Activated CD4-positive, alpha-beta T cell treated with anti-CD3 and anti-CD28 coated beads for 36 hours (primary cell): ENCODE measurements at regions of chr12 and their contacts with region 1.

Region 1: DNA sequence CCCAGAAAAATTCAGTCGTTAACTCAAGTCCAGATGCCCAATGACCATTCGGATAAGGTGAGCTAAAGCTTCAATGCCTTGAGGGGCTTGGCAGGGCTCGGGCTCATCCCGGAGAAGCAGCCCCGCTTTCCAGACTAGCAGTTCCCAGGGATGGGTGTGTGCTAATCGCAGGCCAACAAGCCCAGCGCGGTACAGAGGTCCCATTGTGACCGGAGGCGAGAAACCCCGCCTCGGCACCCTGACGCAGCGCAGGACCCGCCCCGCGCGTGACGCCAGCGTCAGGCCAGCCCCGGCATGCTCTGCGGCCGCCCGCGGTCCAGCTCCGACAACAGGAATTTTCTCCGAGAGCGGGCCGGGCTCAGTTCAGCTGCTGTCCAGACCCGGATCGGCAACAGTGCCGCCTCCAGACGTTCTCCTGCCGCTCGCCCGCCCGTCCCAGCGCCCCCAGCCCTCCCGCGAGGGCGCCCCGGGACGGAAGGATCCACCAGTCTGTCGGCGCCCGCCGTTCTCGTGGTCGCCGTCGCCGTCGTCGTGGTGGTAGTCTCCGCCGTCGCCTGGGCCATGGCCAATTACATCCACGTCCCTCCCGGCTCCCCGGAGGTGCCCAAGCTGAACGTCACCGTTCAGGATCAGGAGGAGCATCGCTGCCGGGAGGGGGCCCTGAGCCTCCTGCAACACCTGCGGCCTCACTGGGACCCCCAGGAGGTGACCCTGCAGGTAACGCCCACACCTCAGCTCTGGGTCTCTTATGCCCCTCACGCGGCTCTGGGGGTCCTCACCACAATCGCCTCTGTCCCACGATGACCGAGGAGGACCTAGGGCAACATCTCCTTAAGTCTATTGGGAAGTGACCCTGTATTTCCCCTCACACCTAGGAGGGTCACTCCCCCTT is at the start of gene ETNK1:
- DNase-seq: peak; percentile 92
- ATAC-seq: peak; percentile 98
- H3K4me3 Mint-ChIP-seq: peak within 1 kb of the TSS; percentile 96
- H3K27ac Mint-ChIP-seq: peak within 1 kb of the TSS; percentile 98
- H3K4me1 Mint-ChIP-seq: peaks cover 32% of the 10 kb centered on the region
- H3K27me3 Mint-ChIP-seq: peaks cover 4% of the 10 kb centered on the region
- total RNA-seq, gene ETNK1: 38.6 to 62.1 TPM

Region 2: GRCh38 chr12:21456291-21456780 is 1168.8 kb before region 1 on chr12:
- CTCF ChIA-PET with region 1: no interaction called
- POLR2A ChIA-PET with region 1: no interaction called
- intact Hi-C with region 1: loop called in 1 of 2 experiments (anchors 5 kb)
- DNase-seq: peak; percentile 59
- ATAC-seq: peak; percentile 84
- H3K4me3 Mint-ChIP-seq: no peak overlapping the region
- H3K27ac Mint-ChIP-seq: peak overlapping the region; percentile 74
- H3K4me1 Mint-ChIP-seq: peaks cover 42% of the 10 kb centered on the region
- H3K27me3 Mint-ChIP-seq: no peaks in the 10 kb centered on the region

Region 3: GRCh38 chr12:22046090-22046967 is 578.8 kb before region 1 on chr12 and contains the start of gene CMAS:
- CTCF ChIA-PET with region 1: no interaction called
- POLR2A ChIA-PET with region 1: no interaction called
- intact Hi-C with region 1: loop called (anchors 10 kb)
- DNase-seq: peak; percentile 90
- ATAC-seq: peak; percentile 88
- H3K4me3 Mint-ChIP-seq: peak within 1 kb of the TSS; percentile 82
- H3K27ac Mint-ChIP-seq: peak within 1 kb of the TSS; percentile 92
- H3K4me1 Mint-ChIP-seq: peaks cover 51% of the 10 kb centered on the region
- H3K27me3 Mint-ChIP-seq: no peaks in the 10 kb centered on the region
- total RNA-seq, gene CMAS: 33.5 to 52.1 TPM

Region 4: DNA sequence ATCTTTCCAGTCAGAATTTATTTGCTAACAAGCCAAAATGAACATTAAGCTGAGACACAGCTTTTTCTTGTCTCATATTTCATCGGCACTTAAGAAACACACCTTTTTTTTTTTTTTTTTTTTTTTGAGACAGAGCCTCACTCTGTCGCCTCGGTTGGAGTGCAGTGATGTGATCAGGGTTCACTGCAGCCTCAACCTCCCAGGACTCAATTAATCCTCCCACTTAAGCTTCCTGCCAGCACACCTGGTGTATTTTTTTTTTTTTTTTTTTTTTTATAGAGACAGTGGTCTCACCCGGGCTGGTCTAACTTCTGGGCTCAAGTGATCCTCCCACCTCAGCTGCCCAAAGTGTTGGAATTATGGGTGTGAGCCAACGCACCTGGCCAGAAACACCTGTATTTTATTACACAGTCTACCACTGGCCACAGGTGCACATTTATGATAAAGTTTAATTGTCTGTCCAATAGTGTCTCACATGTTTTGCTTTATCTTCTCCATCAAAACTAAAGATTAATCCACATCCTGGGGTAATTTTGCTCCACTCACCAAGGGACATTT is 143.5 kb before region 1 on chr12:
- CTCF ChIA-PET with region 1: no interaction called
- POLR2A ChIA-PET with region 1: no interaction called
- intact Hi-C with region 1: loop called in 1 of 2 experiments (anchors 5 kb)
- DNase-seq: no peak
- ATAC-seq: no peak
- H3K4me3 Mint-ChIP-seq: no peak overlapping the region
- H3K27ac Mint-ChIP-seq: no peak overlapping the region
- H3K4me1 Mint-ChIP-seq: peaks cover 17% of the 10 kb centered on the region
- H3K27me3 Mint-ChIP-seq: no peaks in the 10 kb centered on the region

Region 5: GRCh38 chr12:22544038-22544979 is 80.8 kb before region 1 on chr12 and contains the start of gene C2CD5:
- CTCF ChIA-PET with region 1: no interaction called
- POLR2A ChIA-PET with region 1: interaction called, 3 read pairs
- intact Hi-C with region 1: loop called (anchors 1 kb)
- DNase-seq: peak; percentile 97
- ATAC-seq: peak; percentile 88
- H3K4me3 Mint-ChIP-seq: peak within 1 kb of the TSS; percentile 96
- H3K27ac Mint-ChIP-seq: peak within 1 kb of the TSS; percentile 94
- H3K4me1 Mint-ChIP-seq: peaks cover 36% of the 10 kb centered on the region
- H3K27me3 Mint-ChIP-seq: peaks cover 4% of the 10 kb centered on the region
- total RNA-seq, gene C2CD5: 29.5 to 31.6 TPM

Region 6: GRCh38 chr12:22658214-22658613 is 33.1 kb after region 1 on chr12:
- CTCF ChIA-PET with region 1: interaction called, 3 read pairs
- POLR2A ChIA-PET with region 1: interaction called, 5 read pairs
- intact Hi-C with region 1: loop called (anchors 1 kb)
- DNase-seq: peak; percentile 47
- ATAC-seq: peak; percentile 97
- H3K4me3 Mint-ChIP-seq: peak overlapping the region; percentile 16
- H3K27ac Mint-ChIP-seq: peak overlapping the region; percentile 77
- H3K4me1 Mint-ChIP-seq: peaks cover 31% of the 10 kb centered on the region
- H3K27me3 Mint-ChIP-seq: no peaks in the 10 kb centered on the region